Activated CD4-positive, alpha-beta T cell treated with anti-CD3 and anti-CD28 coated beads, Interleukin-2, amount 10 ng/mL, durations not matched to agents 24 days and 14 days (primary cell): ENCODE measurements at regions of chr5 and their contacts with region 1.

Region 1: DNA sequence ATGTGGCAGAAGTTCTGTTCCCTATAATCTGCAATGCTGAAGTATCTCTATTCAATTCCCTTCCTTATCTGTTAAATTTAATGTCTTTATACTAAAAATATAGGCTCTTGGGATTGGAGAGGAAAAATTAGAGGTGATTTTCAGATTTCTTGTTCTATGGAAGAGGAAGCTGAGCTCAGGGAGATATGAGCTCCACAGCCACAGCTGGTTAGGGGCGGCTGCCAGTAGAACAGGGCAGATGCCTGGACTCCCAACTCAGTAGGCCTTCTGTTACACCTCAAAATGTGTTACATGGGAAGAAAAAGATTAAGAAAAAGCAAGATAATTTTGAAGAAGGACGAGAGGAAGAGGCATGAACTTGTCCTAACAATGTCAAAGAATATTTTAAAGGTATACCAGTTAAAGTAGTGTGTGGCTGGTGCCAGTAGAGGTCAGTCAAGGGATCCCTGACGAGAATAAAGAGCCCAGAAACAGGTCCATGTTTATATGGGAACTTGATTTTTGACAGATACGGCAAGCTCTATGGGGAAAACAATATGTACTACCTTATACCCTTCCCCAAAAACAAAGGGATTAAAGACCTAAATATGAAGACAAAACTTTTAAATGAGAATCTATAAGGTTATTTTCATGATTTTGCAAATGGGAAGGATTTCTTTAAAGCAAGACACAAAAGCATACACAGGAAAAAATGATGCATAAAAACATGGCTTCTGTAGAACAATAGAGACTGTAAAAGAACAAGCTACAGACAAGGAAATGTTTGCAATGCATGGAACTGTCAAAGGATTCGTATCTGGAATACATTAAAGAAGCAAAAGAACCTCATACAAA is 28.7 kb downstream of the DNAJC21 start:
- DNase-seq: no peak
- H3K4me3 Mint-ChIP-seq: no peak overlapping the region
- H3K27ac Mint-ChIP-seq: no peak overlapping the region
- H3K4me1 Mint-ChIP-seq: peaks cover 17% of the 10 kb centered on the region
- H3K27me3 Mint-ChIP-seq: no peaks in the 10 kb centered on the region

Region 2: GRCh38 chr5:35003018-35003957 is 45.2 kb after region 1 on chr5:
- intact Hi-C with region 1: loop called (anchors 2 kb)
- DNase-seq: peak; percentile 89
- H3K4me3 Mint-ChIP-seq: no peak overlapping the region
- H3K27ac Mint-ChIP-seq: no peak overlapping the region
- H3K4me1 Mint-ChIP-seq: no peaks in the 10 kb centered on the region
- H3K27me3 Mint-ChIP-seq: peaks cover 20% of the 10 kb centered on the region